HCT116 (cell line): ENCODE measurements at regions of chr17 and their contacts with region 1.

Region 1: GRCh38 chr17:40803617-40804082 is 3.9 kb upstream of the KRT28 start:
- DNase-seq: peak; percentile 74
- ATAC-seq: peak; percentile 99
- H3K4me3 ChIP-seq: no peak overlapping the region
- H3K27ac ChIP-seq: no peak overlapping the region
- H3K4me1 ChIP-seq: peaks cover 3 to 9% of the 10 kb centered on the region in 2 experiments; a peak in 3 of 4 replicates
- H3K27me3 ChIP-seq: no peaks in the 10 kb centered on the region
- CTCF ChIP-seq: peak; percentile 82 to 96 (median 88)
- POLR2A ChIP-seq: no peak
- RAD21 ChIP-seq: peak; percentile 98

Region 2: DNA sequence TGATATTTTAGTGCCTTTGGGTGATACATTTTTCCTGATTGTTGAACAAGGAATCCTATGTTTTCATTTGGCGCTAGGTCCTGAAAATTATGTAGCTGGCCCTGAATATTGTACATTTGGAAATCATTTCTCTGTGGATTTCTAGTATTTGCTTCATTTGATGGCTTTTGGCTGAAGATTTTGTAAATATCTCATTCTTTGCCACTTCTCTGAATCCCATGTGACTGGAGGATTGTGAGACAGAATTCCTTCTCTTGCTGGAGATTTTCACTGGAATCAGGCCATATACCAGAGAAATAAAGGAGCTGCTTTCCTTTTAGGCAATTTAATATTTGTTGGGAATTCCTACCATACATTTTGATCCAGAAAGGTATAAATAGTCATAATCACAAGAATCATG is 12.5 kb before region 1 on chr17:
- CTCF ChIA-PET with region 1: no interaction called
- POLR2A ChIA-PET with region 1: no interaction called
- RAD21 ChIA-PET with region 1: no interaction called
- intact Hi-C with region 1: no loop called
- DNase-seq: no peak
- ATAC-seq: no peak
- H3K4me3 ChIP-seq: no peak overlapping the region
- H3K27ac ChIP-seq: no peak overlapping the region
- H3K4me1 ChIP-seq: no peaks in the 10 kb centered on the region
- H3K27me3 ChIP-seq: no peaks in the 10 kb centered on the region
- CTCF ChIP-seq: no peak
- POLR2A ChIP-seq: no peak
- RAD21 ChIP-seq: no peak

Region 3: DNA sequence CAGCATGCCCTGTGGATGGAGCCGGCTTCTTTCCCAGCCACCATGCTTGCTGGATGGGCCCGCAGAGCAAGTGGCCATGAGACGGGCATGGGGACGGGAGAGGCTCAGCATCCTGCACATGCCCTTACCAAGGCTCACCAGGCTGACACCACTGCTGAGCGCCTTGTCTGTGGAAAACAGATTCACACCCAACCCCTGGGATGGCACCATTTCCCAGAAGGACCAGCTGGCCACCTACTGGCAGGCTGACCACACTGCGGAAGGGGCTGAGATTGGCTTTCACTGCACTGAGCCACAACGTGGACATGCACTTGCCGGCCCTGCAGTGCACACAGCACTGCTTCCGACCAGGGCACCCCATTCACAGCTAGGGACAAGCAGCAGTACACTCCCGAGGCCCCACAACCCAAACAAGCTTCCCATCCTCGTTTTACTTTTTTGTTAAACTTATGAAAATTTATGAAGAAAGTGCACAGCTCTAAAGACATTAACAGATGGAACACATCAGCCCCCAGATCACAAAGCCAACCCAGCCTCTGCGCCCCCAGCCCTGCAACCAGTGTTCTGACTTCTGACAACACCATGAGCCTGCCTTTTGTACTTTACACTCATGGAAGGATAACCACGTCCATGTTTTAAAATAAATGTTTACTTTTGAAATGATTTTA is 525.8 kb after region 1 on chr17:
- CTCF ChIA-PET with region 1: interaction called, 5 read pairs
- POLR2A ChIA-PET with region 1: no interaction called
- RAD21 ChIA-PET with region 1: no interaction called
- intact Hi-C with region 1: loop called (anchors 1 kb)
- DNase-seq: peak; percentile 40
- ATAC-seq: peak; percentile 90
- H3K4me3 ChIP-seq: no peak overlapping the region
- H3K27ac ChIP-seq: peak overlapping the region; percentile 46; the same call in 1 of the 2 replicates
- H3K4me1 ChIP-seq: peaks cover 3 to 21% of the 10 kb centered on the region in 2 experiments; a peak in 3 of 4 replicates
- H3K27me3 ChIP-seq: no peaks in the 10 kb centered on the region
- CTCF ChIP-seq: peak; percentile 59 to 93 (median 82); a peak in 5 of 6 replicates
- POLR2A ChIP-seq: no peak
- RAD21 ChIP-seq: peak; percentile 90

Region 4: DNA sequence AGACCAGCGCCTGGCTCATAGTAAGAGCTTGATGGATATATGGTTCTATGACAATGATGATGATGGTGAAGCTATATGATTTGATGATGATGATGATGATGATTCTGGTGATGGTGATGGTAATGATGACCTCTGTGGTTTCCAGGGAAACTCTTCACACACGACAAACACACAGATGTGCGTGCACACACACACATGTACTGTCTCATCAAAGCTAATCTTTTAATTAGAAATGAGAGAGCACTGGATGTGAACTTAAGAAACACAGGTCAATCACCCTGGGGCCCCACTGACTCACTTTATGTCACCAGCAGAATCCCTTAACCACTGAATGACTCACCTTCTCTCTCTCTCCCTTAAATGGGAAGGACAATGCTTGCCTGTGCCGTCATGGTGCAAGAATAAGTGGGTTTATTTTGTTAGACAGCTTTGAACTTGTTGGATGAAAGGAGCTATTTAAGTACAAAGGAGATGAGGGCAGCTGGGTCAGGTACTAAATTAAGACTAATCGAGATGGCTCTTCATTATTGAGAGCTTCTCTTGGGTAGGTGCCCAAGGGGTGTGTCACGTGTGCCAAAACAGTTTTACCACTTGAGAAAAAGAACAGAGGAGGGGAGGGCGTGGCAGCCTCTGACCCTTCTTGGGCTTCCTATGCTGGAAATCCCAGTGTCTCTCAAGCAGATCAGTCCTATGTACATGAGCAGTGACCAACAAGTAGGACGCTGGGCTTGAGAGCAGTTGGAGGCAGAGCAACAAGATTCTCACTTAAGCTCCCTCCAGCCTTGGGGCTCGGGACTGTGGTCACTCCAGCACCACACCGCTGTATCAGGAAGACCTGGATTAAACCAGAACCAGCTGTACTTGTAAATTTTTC is 600.4 kb after region 1 on chr17:
- CTCF ChIA-PET with region 1: no interaction called
- POLR2A ChIA-PET with region 1: no interaction called
- RAD21 ChIA-PET with region 1: no interaction called
- intact Hi-C with region 1: loop called (anchors 10 kb)
- DNase-seq: peak; percentile 99
- ATAC-seq: peak; percentile 84
- H3K4me3 ChIP-seq: no peak overlapping the region
- H3K27ac ChIP-seq: peak overlapping the region; percentile 78
- H3K4me1 ChIP-seq: peaks cover 43 to 73% of the 10 kb centered on the region in 2 experiments
- H3K27me3 ChIP-seq: no peaks in the 10 kb centered on the region
- CTCF ChIP-seq: no peak
- POLR2A ChIP-seq: no peak
- RAD21 ChIP-seq: peak; percentile 56